T-cell (primary cell): ENCODE measurements at regions of chr1 and their contacts with region 1.

Region 1: GRCh38 chr1:43719063-43719462 is 11.7 kb downstream of the ST3GAL3 start:
- DNase-seq: no peak
- ATAC-seq: no peak
- H3K4me3 ChIP-seq: no peak overlapping the region
- H3K4me3 Mint-ChIP-seq: no peak overlapping the region
- H3K27ac ChIP-seq: no peak overlapping the region
- H3K27ac Mint-ChIP-seq: no peak overlapping the region
- H3K4me1 ChIP-seq: no peaks in the 10 kb centered on the region
- H3K4me1 Mint-ChIP-seq: peaks cover 2 to 16% (median 7%) of the 10 kb centered on the region in 3 donors
- H3K27me3 ChIP-seq: no peaks in the 10 kb centered on the region
- H3K27me3 Mint-ChIP-seq: no peaks in the 10 kb centered on the region

Region 2: DNA sequence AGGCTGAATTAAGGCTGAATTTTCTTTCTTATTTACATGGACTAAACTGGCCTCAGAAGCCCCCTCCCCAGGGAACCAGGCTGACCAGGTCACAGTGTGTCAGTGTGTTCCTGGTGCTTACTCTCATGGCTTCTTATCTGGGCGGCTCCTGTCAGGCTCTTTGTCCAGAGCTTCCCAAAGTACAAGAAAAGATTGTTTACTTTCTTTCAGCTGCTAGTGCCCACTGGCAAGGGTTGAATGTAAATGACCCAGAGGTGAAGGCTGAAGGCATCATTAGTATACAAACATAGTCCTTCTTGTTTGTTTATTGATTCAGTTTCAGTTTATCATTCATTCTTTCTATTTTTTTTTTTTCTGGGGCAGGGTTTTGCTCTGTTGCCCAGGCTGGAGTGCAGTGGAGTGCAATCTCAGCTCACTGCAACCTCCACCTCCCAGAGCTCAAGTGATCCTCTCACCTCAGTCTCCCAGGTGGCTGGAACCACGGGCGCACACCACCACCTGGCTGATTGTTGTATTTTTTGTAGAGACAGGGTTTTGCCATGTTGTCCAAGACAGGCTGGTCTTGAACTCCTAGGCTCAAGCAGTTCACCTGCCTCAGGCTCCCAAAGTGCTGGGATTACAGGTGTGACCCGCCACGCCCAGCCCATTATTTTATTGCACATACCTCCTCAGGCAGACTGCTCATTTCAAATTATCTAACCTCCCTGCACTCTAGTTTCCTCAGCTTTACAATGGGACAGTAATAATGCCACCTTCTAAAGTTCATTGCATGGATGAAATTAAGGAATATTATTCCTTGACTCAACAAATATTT is 78.9 kb before region 1 on chr1:
- CTCF ChIA-PET with region 1: no interaction called
- POLR2A ChIA-PET with region 1: no interaction called
- DNase-seq: no peak
- ATAC-seq: no peak
- H3K4me3 ChIP-seq: no peak overlapping the region
- H3K4me3 Mint-ChIP-seq: no peak overlapping the region
- H3K27ac ChIP-seq: no peak overlapping the region
- H3K27ac Mint-ChIP-seq: no peak overlapping the region
- H3K4me1 ChIP-seq: no peaks in the 10 kb centered on the region
- H3K4me1 Mint-ChIP-seq: no peaks in the 10 kb centered on the region
- H3K27me3 ChIP-seq: peaks cover 0 to 8% of the 10 kb centered on the region in 2 experiments
- H3K27me3 Mint-ChIP-seq: peaks cover 5 to 14% of the 10 kb centered on the region in 2 donors

Region 3: GRCh38 chr1:43750083-43750482 is 31.0 kb after region 1 on chr1:
- CTCF ChIA-PET with region 1: no interaction called
- POLR2A ChIA-PET with region 1: interaction called in 1 of 2 experiments, 12 read pairs
- DNase-seq: no peak
- ATAC-seq: no peak
- H3K4me3 ChIP-seq: no peak overlapping the region
- H3K4me3 Mint-ChIP-seq: no peak overlapping the region
- H3K27ac ChIP-seq: no peak overlapping the region
- H3K27ac Mint-ChIP-seq: no peak overlapping the region
- H3K4me1 ChIP-seq: no peaks in the 10 kb centered on the region
- H3K4me1 Mint-ChIP-seq: no peaks in the 10 kb centered on the region
- H3K27me3 ChIP-seq: no peaks in the 10 kb centered on the region
- H3K27me3 Mint-ChIP-seq: no peaks in the 10 kb centered on the region